CD4-positive, alpha-beta T cell (primary cell): ENCODE measurements at regions of chr19 and their contacts with region 1.

Region 1: GRCh38 chr19:40425450-40426287 is at the start of gene SERTAD1:
- DNase-seq: peak; percentile 100
- ATAC-seq: peak; percentile 89
- H3K4me3 ChIP-seq: peak within 1 kb of the TSS; percentile 89
- H3K4me3 Mint-ChIP-seq: peak within 1 kb of the TSS; percentile 99
- H3K27ac ChIP-seq: peak within 1 kb of the TSS; percentile 90
- H3K27ac Mint-ChIP-seq: peak within 1 kb of the TSS; percentile 91
- H3K4me1 ChIP-seq: peaks cover 45% of the 10 kb centered on the region
- H3K4me1 Mint-ChIP-seq: peaks cover 36% of the 10 kb centered on the region
- H3K27me3 ChIP-seq: no peaks in the 10 kb centered on the region
- H3K27me3 Mint-ChIP-seq: no peaks in the 10 kb centered on the region
- CTCF ChIP-seq: peak; percentile 67
- total RNA-seq, gene SERTAD1: 26.4 to 26.5 TPM

Region 2: GRCh38 chr19:39506944-39507714 is 918.5 kb before region 1 on chr19:
- CTCF ChIA-PET with region 1: no interaction called
- POLR2A ChIA-PET with region 1: no interaction called
- intact Hi-C with region 1: no loop called
- DNase-seq: peak in 8 of 14 experiments; percentile 18 to 78 (median 44)
- ATAC-seq: peak; percentile 46
- H3K4me3 ChIP-seq: peak overlapping the region; percentile 43
- H3K4me3 Mint-ChIP-seq: peak overlapping the region; percentile 71
- H3K27ac ChIP-seq: no peak overlapping the region
- H3K27ac Mint-ChIP-seq: no peak overlapping the region
- H3K4me1 ChIP-seq: peaks cover 23% of the 10 kb centered on the region
- H3K4me1 Mint-ChIP-seq: peaks cover 38% of the 10 kb centered on the region
- H3K27me3 ChIP-seq: peaks cover 45 to 52% of the 10 kb centered on the region in 2 experiments
- H3K27me3 Mint-ChIP-seq: peaks cover 68% of the 10 kb centered on the region
- CTCF ChIP-seq: no peak

Region 3: GRCh38 chr19:40285353-40286234 is 140.1 kb before region 1 on chr19:
- CTCF ChIA-PET with region 1: interaction called, 3 read pairs
- POLR2A ChIA-PET with region 1: interaction called, 7 read pairs
- intact Hi-C with region 1: loop called in 1 of 2 experiments (anchors 5 kb)
- DNase-seq: peak; percentile 94 to 100 (median 98)
- ATAC-seq: peak; percentile 75
- H3K4me3 ChIP-seq: peak overlapping the region; percentile 68
- H3K4me3 Mint-ChIP-seq: peak overlapping the region; percentile 89
- H3K27ac ChIP-seq: peak overlapping the region; percentile 78 to 90
- H3K27ac Mint-ChIP-seq: peak overlapping the region; percentile 93
- H3K4me1 ChIP-seq: peaks cover 52% of the 10 kb centered on the region
- H3K4me1 Mint-ChIP-seq: peaks cover 46% of the 10 kb centered on the region
- H3K27me3 ChIP-seq: no peaks in the 10 kb centered on the region
- H3K27me3 Mint-ChIP-seq: no peaks in the 10 kb centered on the region
- CTCF ChIP-seq: no peak

Region 4: GRCh38 chr19:40403262-40403984 is 22.2 kb before region 1 on chr19:
- CTCF ChIA-PET with region 1: interaction called, 24 read pairs
- POLR2A ChIA-PET with region 1: interaction called, 31 read pairs
- intact Hi-C with region 1: loop called in 1 of 2 experiments (anchors 1 kb)
- DNase-seq: peak; percentile 46 to 89 (median 70)
- ATAC-seq: peak; percentile 45
- H3K4me3 ChIP-seq: peak overlapping the region; percentile 88
- H3K4me3 Mint-ChIP-seq: peak overlapping the region; percentile 94
- H3K27ac ChIP-seq: peak overlapping the region; percentile 22 to 56
- H3K27ac Mint-ChIP-seq: peak overlapping the region; percentile 64
- H3K4me1 ChIP-seq: peaks cover 34% of the 10 kb centered on the region
- H3K4me1 Mint-ChIP-seq: peaks cover 35% of the 10 kb centered on the region
- H3K27me3 ChIP-seq: no peaks in the 10 kb centered on the region
- H3K27me3 Mint-ChIP-seq: no peaks in the 10 kb centered on the region
- CTCF ChIP-seq: no peak

Region 5: DNA sequence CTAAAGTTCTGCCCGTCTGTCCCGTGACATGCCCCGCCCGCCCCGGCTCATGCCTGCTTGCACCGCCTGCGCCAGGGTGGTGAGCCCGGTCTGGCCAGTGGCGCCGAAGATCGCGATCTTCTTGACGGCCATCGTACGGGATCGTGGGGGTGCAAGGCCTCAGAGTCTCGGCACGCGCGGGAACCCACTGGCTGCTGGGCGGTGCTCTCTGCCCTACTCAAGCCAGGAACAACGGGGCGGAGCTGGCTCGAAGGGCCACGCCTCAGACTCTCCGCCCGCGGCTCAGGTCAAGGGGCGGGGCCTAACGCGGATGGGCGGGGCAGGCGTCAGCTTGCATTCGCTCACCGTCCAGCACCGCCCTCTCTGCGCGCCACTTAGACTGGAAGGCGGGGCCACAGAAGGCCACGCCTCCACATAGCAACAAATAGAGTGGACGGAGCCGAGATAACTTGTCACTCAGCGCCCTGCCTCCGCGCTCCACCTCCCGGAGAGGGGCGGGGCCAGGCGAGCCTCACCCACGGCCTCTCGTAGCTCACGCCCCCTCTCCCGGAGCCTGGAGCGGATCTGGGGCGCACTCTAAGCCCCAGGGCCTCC is 40.0 kb after region 1 on chr19 and contains the start of gene BLVRB:
- CTCF ChIA-PET with region 1: interaction called, 20 read pairs
- POLR2A ChIA-PET with region 1: interaction called, 42 read pairs
- intact Hi-C with region 1: loop called (anchors 2 kb)
- DNase-seq: peak; percentile 98 to 100 (median 100)
- ATAC-seq: peak; percentile 81
- H3K4me3 ChIP-seq: peak within 1 kb of the TSS; percentile 81
- H3K4me3 Mint-ChIP-seq: peak within 1 kb of the TSS; percentile 93
- H3K27ac ChIP-seq: peak within 1 kb of the TSS; percentile 13 to 62
- H3K27ac Mint-ChIP-seq: peak within 1 kb of the TSS; percentile 87
- H3K4me1 ChIP-seq: peaks cover 35% of the 10 kb centered on the region
- H3K4me1 Mint-ChIP-seq: peaks cover 30% of the 10 kb centered on the region
- H3K27me3 ChIP-seq: peaks cover 0 to 16% of the 10 kb centered on the region in 2 experiments
- H3K27me3 Mint-ChIP-seq: peaks cover 25% of the 10 kb centered on the region
- CTCF ChIP-seq: no peak
- total RNA-seq, gene BLVRB: 4.3 to 5.2 TPM

Region 6: DNA sequence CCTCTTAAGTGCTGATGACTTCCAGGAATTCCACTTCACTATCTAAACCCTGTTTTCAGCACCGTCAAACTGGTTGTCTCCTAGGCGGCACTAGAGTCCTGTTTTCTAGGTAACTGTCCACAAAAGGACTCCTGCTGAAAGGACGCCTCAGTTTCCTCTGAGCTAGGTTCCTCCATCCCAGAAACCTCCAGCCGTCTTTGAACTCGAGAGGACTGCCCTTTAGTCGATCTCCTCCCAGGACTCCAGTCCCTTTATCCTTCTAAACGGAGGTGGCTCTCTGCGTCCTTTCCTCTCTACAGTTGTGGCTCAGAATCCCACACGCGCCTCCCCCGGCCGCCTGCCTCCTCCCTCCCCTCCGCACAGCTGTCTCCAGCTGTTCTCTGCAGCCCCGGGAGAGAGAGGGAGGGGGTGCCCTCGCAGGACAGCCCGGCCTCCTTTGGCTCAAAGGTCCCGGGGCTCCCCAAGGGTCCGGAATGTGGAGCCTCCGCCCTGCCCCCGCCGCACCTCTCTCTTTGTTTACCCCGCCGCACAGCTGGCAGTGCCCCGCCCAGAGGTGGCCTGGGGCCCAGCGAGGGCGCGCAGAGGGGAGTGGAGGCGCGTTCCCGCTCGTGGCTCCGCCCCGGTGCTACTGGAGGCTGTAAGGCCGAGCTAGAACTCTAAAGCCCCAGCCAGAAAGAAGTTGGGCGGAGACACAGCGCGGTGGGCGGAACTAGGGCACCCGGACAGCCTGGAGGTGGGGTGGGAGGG is 177.9 kb after region 1 on chr19:
- CTCF ChIA-PET with region 1: interaction called, 4 read pairs
- POLR2A ChIA-PET with region 1: interaction called, 4 read pairs
- intact Hi-C with region 1: loop called in 1 of 2 experiments (anchors 5 kb)
- DNase-seq: peak; percentile 91 to 99 (median 97)
- ATAC-seq: peak; percentile 72
- H3K4me3 ChIP-seq: peak overlapping the region; percentile 66
- H3K4me3 Mint-ChIP-seq: peak overlapping the region; percentile 88
- H3K27ac ChIP-seq: peak overlapping the region in 1 of 2 donors; percentile 49
- H3K27ac Mint-ChIP-seq: peak overlapping the region; percentile 88
- H3K4me1 ChIP-seq: peaks cover 93% of the 10 kb centered on the region
- H3K4me1 Mint-ChIP-seq: peaks cover 79% of the 10 kb centered on the region
- H3K27me3 ChIP-seq: peaks cover 29 to 33% of the 10 kb centered on the region in 2 experiments
- H3K27me3 Mint-ChIP-seq: peaks cover 38% of the 10 kb centered on the region
- CTCF ChIP-seq: no peak